IMR-90 (cell line): ENCODE measurements at regions of chr12 and their contacts with region 1.

Region 1: GRCh38 chr12:69157023-69157655 is 82.2 kb upstream of the CPSF6 start:
- DNase-seq: peak; percentile 76
- ATAC-seq: peak; percentile 98
- H3K4me3 ChIP-seq: no peak overlapping the region
- H3K27ac ChIP-seq: no peak overlapping the region
- H3K4me1 ChIP-seq: no peaks in the 10 kb centered on the region; the same call in 1 of the 2 replicates
- H3K27me3 ChIP-seq: no peaks in the 10 kb centered on the region
- CTCF ChIP-seq: peak; percentile 91
- POLR2A ChIP-seq: no peak
- RAD21 ChIP-seq: peak; percentile 70

Region 2: GRCh38 chr12:68863109-68863770 is 293.9 kb before region 1 on chr12:
- CTCF ChIA-PET with region 1: interaction called, 3 read pairs
- POLR2A ChIA-PET with region 1: no interaction called
- dilution Hi-C with region 1: no loop called
- in situ Hi-C with region 1: no loop called
- intact Hi-C with region 1: loop called (anchors 1 kb)
- DNase-seq: no peak
- ATAC-seq: no peak; the same call in 1 of the 2 replicates
- H3K4me3 ChIP-seq: no peak overlapping the region
- H3K27ac ChIP-seq: no peak overlapping the region
- H3K4me1 ChIP-seq: no peaks in the 10 kb centered on the region
- H3K27me3 ChIP-seq: no peaks in the 10 kb centered on the region
- CTCF ChIP-seq: no peak
- POLR2A ChIP-seq: no peak
- RAD21 ChIP-seq: no peak

Region 3: DNA sequence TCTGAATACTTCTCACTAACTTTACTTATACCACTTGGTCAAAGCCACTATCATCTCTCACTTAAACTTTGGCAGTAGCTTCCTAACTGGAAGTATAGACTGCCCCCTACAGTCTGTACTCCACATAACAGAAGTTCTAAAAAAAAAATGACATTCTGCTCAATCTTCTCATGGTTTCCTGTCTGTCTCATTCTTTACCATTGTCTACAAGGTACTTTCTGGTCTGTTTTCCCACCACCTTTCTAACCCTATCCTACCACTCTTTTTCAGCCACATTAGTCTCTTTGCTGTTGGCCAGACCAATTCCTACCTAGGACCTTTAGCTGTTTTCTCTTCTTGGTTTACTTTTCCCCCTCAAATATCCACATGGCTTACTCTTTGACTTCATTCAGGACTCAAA is 96.9 kb after region 1 on chr12:
- CTCF ChIA-PET with region 1: no interaction called
- POLR2A ChIA-PET with region 1: no interaction called
- dilution Hi-C with region 1: no loop called
- in situ Hi-C with region 1: no loop called
- intact Hi-C with region 1: loop called (anchors 5 kb)
- DNase-seq: peak; percentile 46
- ATAC-seq: peak; percentile 29; the same call in 1 of the 2 replicates
- H3K4me3 ChIP-seq: no peak overlapping the region
- H3K27ac ChIP-seq: no peak overlapping the region
- H3K4me1 ChIP-seq: peaks cover 2% of the 10 kb centered on the region; the same call in 1 of the 2 replicates
- H3K27me3 ChIP-seq: no peaks in the 10 kb centered on the region
- CTCF ChIP-seq: peak; percentile 61
- POLR2A ChIP-seq: no peak
- RAD21 ChIP-seq: peak; percentile 53

Region 4: GRCh38 chr12:69570545-69571399 is 413.6 kb after region 1 on chr12:
- CTCF ChIA-PET with region 1: no interaction called
- POLR2A ChIA-PET with region 1: no interaction called
- dilution Hi-C with region 1: no loop called
- in situ Hi-C with region 1: no loop called
- intact Hi-C with region 1: loop called (anchors 10 kb)
- DNase-seq: peak; percentile 69
- ATAC-seq: peak; percentile 74; the same call in 1 of the 2 replicates
- H3K4me3 ChIP-seq: no peak overlapping the region
- H3K27ac ChIP-seq: no peak overlapping the region
- H3K4me1 ChIP-seq: peaks cover 4% of the 10 kb centered on the region; the same call in 1 of the 2 replicates
- H3K27me3 ChIP-seq: no peaks in the 10 kb centered on the region
- CTCF ChIP-seq: peak; percentile 77
- POLR2A ChIP-seq: no peak
- RAD21 ChIP-seq: peak; percentile 82

Region 5: GRCh38 chr12:70367258-70368141 is 1210.4 kb after region 1 on chr12:
- CTCF ChIA-PET with region 1: no interaction called
- POLR2A ChIA-PET with region 1: no interaction called
- dilution Hi-C with region 1: no loop called
- in situ Hi-C with region 1: no loop called
- intact Hi-C with region 1: no loop called
- DNase-seq: peak; percentile 11
- ATAC-seq: no peak; the same call in 1 of the 2 replicates
- H3K4me3 ChIP-seq: peak overlapping the region; percentile 85
- H3K27ac ChIP-seq: no peak overlapping the region
- H3K4me1 ChIP-seq: peaks cover 3% of the 10 kb centered on the region; the same call in 1 of the 2 replicates
- H3K27me3 ChIP-seq: peaks cover 15% of the 10 kb centered on the region; the same call in 1 of the 2 replicates
- CTCF ChIP-seq: no peak
- POLR2A ChIP-seq: no peak
- RAD21 ChIP-seq: no peak